ENCODE measurements at regions of chr10 and their contacts with region 1.

Region 1: GRCh38 chr10:14039968-14040671 is 290.6 kb downstream of the FRMD4A start:
- DNase-seq: no peak
- ATAC-seq: peak in 7 of 8 donors; percentile 35 to 73 (median 49)
- H3K4me3 ChIP-seq: no peak overlapping the region
- H3K27ac ChIP-seq: peak overlapping the region in 9 of 10 donors; percentile 2 to 68 (median 47)
- H3K4me1 ChIP-seq: peaks cover 0 to 26% (median 19%) of the 10 kb centered on the region in 9 donors
- H3K27me3 ChIP-seq: no peaks in the 10 kb centered on the region
- CTCF ChIP-seq: no peak

Region 2: GRCh38 chr10:13859979-13860654 is 180.0 kb before region 1 on chr10:
- intact Hi-C with region 1: no loop called
- DNase-seq: no peak
- ATAC-seq: peak in 5 of 8 donors; percentile 16 to 41 (median 37)
- H3K4me3 ChIP-seq: no peak overlapping the region
- H3K27ac ChIP-seq: peak overlapping the region in 7 of 10 donors; percentile 8 to 77 (median 43)
- H3K4me1 ChIP-seq: peaks cover 0 to 56% (median 33%) of the 10 kb centered on the region in 9 donors
- H3K27me3 ChIP-seq: no peaks in the 10 kb centered on the region
- CTCF ChIP-seq: no peak

Region 3: DNA sequence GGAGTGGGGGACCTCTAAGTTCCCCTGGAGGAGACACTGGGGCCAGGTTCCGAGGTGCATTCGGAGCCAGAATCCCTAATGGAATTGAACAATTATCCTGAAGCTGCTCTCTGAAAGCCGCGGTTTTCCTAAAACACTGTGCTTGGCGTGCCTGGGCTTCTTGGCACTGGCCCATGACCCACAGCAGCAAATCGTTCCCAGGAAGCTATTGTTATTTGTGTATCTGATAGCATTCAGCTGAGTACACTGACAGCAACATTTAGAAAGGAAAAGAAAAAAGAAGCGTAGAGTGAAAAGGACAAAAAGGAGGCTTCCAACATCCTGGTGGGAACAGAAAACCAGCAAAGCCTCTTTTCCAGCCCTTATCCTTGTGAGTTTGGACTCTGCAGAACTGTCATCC is 49.2 kb before region 1 on chr10:
- intact Hi-C with region 1: loop called in 1 of 10 experiments (anchors 5 kb)
- DNase-seq: peak; percentile 31 to 58
- ATAC-seq: peak in 7 of 8 donors; percentile 20 to 71 (median 63)
- H3K4me3 ChIP-seq: peak overlapping the region in 6 of 10 donors; percentile 3 to 34 (median 20)
- H3K27ac ChIP-seq: peak overlapping the region; percentile 46 to 93 (median 78)
- H3K4me1 ChIP-seq: peaks cover 6 to 65% (median 51%) of the 10 kb centered on the region in 9 donors
- H3K27me3 ChIP-seq: no peaks in the 10 kb centered on the region
- CTCF ChIP-seq: no peak

Region 4: DNA sequence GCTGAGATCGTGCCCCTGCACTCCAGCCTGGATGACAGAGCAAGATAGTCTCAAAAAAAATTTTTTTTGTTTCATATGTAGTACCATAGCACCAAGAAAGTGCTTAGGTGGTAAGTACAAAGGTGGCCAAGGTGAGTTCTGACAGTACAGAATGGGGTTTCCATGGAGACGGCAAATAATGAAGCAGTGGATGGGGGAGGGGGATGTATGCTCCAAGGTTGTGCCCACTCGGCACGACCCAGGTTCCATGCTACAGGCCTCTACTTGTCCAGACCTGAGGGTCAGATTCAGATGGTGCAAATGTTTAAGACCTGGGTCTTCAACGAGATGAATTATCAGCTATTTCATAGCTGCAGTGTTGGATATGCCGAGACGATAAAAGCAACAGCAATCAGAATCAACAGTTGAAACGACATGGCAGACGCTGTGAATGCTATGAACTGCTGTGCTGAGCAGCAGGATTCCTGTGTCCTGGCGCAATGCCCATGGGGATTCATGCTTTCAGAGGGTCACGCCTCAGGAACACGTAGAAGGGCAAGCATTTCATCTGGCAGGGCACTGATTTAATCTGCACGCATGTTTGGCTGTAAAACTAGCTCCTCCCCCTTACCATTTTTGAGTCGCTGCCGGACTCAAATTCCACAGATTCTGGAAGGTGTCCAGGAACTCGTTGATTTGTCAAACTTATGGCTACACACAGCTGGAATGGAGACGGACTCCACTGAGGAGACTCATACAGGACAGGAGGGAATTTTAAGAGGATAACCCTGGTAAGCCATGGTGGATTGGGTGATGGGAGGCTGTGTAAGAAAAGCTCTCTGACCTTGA is 34.2 kb after region 1 on chr10:
- intact Hi-C with region 1: loop called in 1 of 10 experiments (anchors 5 kb)
- DNase-seq: peak; percentile 80 to 85
- ATAC-seq: peak; percentile 88 to 97 (median 93)
- H3K4me3 ChIP-seq: peak overlapping the region in 8 of 10 donors; percentile 5 to 37 (median 28)
- H3K27ac ChIP-seq: peak overlapping the region in 5 of 10 donors; percentile 1 to 35 (median 24)
- H3K4me1 ChIP-seq: peaks cover 0 to 17% (median 13%) of the 10 kb centered on the region in 9 donors
- H3K27me3 ChIP-seq: no peaks in the 10 kb centered on the region
- CTCF ChIP-seq: no peak

Region 5: GRCh38 chr10:14084875-14085274 is 44.8 kb after region 1 on chr10:
- intact Hi-C with region 1: loop called in 1 of 10 experiments (anchors 5 kb)
- DNase-seq: no peak
- ATAC-seq: no peak
- H3K4me3 ChIP-seq: no peak overlapping the region
- H3K27ac ChIP-seq: no peak overlapping the region
- H3K4me1 ChIP-seq: peaks cover 0 to 12% (median 7%) of the 10 kb centered on the region in 9 donors
- H3K27me3 ChIP-seq: peaks cover 0 to 8% (median 0%) of the 10 kb centered on the region in 7 donors
- CTCF ChIP-seq: no peak

Measured in heart right ventricle (tissue), 16 donors.